Activated CD4-positive, alpha-beta T cell treated with anti-CD3 and anti-CD28 coated beads, Interleukin-2, amount 10 ng/mL, durations not matched to agents 24 days and 14 days (primary cell): ENCODE measurements at regions of chr16 and their contacts with region 1.

Region 1: DNA sequence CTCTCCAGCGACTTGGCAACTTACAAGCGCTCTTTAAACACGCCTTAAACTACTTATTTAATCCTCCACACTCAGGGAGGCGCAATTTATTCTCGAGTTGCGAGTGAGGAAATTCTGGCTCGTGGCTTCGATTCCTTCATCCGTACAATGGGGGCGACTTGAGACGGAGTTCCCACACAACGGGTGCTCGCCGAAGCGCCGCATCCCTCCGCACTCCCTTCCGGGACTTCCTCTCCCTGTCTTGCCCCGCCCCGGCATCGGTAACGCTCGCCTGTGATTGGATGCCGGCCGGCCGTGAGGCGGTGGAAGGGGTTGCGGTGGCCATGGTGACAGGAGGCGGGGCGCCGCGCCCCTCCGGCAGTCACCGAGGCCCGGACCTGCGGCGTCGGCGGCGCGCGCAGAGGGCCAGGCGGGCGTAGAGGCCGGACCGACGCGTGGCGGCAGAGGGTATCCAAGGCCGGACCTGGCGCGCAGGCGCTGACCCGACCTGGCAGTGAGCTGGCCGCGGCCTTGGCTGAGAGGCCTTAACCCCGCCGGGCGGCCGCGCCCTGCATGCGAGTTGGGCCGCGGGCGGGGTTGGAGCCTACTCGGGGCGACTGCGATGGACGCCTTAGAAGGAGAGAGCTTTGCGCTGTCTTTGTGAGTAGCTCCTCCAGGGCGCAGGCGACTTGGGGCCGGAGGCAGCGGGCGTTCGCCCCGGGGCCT is at the start of gene ARL2BP:
- DNase-seq: peak; percentile 99
- H3K4me3 Mint-ChIP-seq: peak within 1 kb of the TSS; percentile 91
- H3K27ac Mint-ChIP-seq: peak within 1 kb of the TSS; percentile 95
- H3K4me1 Mint-ChIP-seq: peaks cover 14% of the 10 kb centered on the region
- H3K27me3 Mint-ChIP-seq: no peaks in the 10 kb centered on the region
- total RNA-seq, gene ARL2BP: 24.9 and 26.7 TPM in 2 replicates

Region 2: DNA sequence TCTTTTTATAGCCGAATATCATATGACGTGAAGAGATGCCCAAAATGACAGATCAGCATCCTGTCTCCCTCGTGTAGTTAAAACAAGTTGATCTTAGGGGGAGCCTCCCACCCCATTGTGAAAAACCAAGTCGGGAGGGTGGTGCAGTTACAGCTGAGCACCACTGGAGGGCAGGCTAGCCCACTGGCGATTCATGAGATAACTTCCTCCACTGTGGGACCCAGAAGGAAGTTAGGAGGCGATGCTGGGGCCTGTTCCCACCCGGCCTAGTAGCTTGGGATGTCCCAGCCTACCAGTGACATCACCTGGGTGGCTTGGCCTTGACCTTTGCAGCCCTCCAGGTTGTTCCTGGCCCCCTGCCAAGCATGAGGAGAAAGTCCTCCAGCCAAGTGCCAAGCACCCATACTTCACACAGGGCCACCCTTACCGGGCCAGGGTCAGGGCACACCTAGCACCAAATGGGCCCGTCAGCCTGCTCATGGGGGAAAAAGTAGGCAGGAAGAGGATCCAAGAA is 160.6 kb before region 1 on chr16:
- intact Hi-C with region 1: loop called (anchors 5 kb)
- DNase-seq: peak; percentile 92
- H3K4me3 Mint-ChIP-seq: no peak overlapping the region
- H3K27ac Mint-ChIP-seq: peak overlapping the region; percentile 10
- H3K4me1 Mint-ChIP-seq: peaks cover 6% of the 10 kb centered on the region
- H3K27me3 Mint-ChIP-seq: no peaks in the 10 kb centered on the region

Region 3: DNA sequence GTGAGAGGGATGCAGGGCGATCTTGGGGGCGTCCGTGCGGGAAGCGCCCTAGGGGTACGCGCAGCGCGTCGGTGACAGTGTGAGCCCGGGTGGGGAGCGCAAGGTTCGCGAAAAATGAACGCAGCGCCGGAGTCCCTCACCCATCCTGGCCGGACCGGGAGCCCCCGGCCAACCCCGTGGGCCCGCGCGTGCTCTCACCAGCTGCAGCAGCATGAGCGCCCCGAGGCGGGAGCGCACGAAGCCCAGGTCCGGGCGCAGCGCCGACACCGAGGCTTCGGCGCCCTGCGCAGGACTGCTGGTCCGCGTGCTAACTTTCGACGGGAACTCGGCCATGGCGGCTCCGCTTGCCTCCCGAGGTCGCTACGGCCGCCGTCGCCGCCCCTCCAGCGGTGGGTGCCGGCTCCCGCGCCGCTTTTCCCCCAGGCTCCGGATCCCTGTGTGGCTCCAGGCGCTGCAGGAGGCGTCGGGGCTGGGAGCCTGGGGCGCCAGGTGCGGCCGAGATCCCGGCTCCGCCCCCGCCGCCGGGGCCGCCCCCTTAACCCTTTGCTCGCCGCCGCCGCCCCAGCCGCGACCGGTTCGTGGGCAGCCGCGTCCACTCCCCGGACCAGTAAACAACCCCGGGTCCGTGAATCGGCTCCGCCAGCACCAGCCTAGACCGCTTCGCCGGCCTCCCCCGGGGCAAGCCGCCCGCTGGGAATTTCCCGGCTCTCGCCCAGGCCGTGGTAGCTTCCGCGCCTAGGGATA is 39.5 kb after region 1 on chr16 and contains the start of gene PLLP:
- intact Hi-C with region 1: loop called (anchors 2 kb)
- DNase-seq: peak; percentile 86
- H3K4me3 Mint-ChIP-seq: peak within 1 kb of the TSS; percentile 77
- H3K27ac Mint-ChIP-seq: peak within 1 kb of the TSS; percentile 63
- H3K4me1 Mint-ChIP-seq: peaks cover 21% of the 10 kb centered on the region
- H3K27me3 Mint-ChIP-seq: peaks cover 35% of the 10 kb centered on the region
- total RNA-seq, gene PLLP: not detected in 2 replicates

Region 4: GRCh38 chr16:57416122-57416509 is 171.2 kb after region 1 on chr16:
- intact Hi-C with region 1: loop called (anchors 5 kb)
- DNase-seq: no peak
- H3K4me3 Mint-ChIP-seq: no peak overlapping the region
- H3K27ac Mint-ChIP-seq: no peak overlapping the region
- H3K4me1 Mint-ChIP-seq: peaks cover 15% of the 10 kb centered on the region
- H3K27me3 Mint-ChIP-seq: peaks cover 2% of the 10 kb centered on the region

Region 5: DNA sequence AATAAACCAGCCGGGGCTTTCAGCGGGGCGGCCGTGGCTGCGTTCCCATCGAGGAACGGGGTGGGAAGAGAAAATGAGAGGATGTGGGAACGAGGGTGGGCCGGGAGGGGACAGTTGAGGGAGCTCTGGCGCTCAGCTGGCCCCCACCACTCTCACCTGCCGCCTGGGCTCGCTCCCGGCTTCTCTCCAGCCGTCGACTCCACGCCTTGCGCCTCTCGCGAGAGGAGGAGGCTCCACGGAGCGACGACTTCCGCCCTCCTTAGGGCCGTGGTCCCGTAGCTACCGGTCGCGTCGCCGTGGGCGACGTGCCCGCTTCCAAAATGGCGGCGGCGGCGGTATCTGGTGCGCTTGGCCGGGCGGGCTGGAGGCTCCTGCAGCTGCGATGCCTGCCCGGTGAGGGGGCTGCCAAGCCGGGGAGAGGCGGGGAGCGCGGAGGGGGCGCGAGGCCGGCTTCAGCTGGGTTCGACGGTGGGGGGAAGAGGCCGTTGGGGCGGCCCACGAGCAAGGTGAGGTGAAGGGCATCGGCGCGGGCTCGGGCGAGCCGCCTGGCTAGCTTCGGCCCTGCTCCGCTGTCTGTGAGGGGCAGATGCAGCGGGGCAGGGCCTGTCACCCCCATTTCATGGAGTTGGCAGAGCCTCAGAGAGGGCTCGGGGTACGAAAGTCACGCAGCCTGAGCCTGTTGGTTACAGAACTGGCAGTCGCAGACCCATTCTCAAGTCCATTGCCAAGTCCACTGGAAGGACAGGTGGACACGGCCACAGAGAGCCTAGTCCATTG is 202.5 kb after region 1 on chr16 and contains the starts of genes CIAPIN1 and COQ9:
- intact Hi-C with region 1: loop called (anchors 1 kb)
- DNase-seq: peak; percentile 98
- H3K4me3 Mint-ChIP-seq: peak within 1 kb of the TSS; percentile 95
- H3K27ac Mint-ChIP-seq: peak within 1 kb of the TSS; percentile 92
- H3K4me1 Mint-ChIP-seq: peaks cover 24% of the 10 kb centered on the region
- H3K27me3 Mint-ChIP-seq: no peaks in the 10 kb centered on the region
- total RNA-seq, gene CIAPIN1: 85.4 TPM in 2 replicates
- total RNA-seq, gene COQ9: 55.2 and 56.7 TPM in 2 replicates